Right cardiac atrium (tissue), 5 donors: ENCODE measurements at regions of chr4 and their contacts with region 1.

Region 1: GRCh38 chr4:42282081-42282901 is 115.0 kb upstream of the SHISA3 start:
- DNase-seq: peak in 2 of 3 donors; percentile 31 to 71
- ATAC-seq: peak; percentile 93 to 94
- H3K4me3 ChIP-seq: no peak overlapping the region
- H3K27ac ChIP-seq: no peak overlapping the region
- H3K4me1 ChIP-seq: no peaks in the 10 kb centered on the region
- H3K27me3 ChIP-seq: no peaks in the 10 kb centered on the region

Region 2: DNA sequence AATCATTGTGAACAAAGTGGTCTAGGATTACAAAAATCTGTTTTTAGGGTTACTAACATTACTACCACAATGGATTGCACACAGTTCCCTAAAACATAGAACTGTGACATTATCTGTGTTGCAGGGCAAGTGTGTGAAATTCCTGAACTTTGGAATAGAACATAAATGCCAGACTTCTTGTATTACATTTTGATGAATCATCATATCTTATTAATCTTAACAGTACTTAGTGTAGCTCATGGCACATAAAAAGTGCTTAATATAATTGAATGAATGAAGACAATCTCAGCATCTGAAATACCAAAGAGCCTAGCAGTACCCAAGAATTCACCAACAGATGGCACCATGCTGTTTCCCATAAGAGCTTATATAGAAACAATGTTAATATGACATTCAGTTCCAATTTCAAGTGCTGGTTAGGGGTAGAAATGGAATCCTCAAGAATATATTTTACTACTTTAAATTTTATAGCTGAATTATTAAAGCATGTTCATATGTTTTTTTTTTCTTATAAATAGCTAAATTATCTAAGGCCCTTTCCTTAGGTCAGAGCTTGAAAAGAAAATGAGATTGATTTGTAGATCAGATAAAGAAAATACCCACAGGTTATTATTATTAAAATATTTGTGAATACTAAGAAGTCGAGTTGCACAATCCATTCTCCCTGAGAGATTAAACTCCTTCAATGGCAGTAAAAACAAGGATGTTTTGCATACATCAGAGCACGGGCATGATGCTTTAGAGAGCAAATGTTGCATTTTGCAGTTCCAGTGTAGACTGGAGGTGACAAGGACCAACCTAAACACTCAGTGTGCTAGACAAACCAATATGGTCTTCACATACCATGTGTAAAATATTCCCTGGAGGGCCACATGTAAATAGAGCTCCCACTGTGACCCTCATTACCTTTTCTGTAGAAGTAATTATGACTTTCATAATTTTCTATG is 89.3 kb after region 1 on chr4:
- intact Hi-C with region 1: loop called in 2 of 4 experiments (anchors 5 to 10 kb)
- DNase-seq: no peak
- ATAC-seq: peak in 1 of 2 donors; percentile 45
- H3K4me3 ChIP-seq: no peak overlapping the region
- H3K27ac ChIP-seq: no peak overlapping the region
- H3K4me1 ChIP-seq: no peaks in the 10 kb centered on the region
- H3K27me3 ChIP-seq: no peaks in the 10 kb centered on the region

Region 3: GRCh38 chr4:42513748-42514492 is 231.6 kb after region 1 on chr4:
- intact Hi-C with region 1: loop called in 2 of 4 experiments (anchors 2 to 5 kb)
- DNase-seq: no peak
- ATAC-seq: peak in 1 of 2 donors; percentile 89
- H3K4me3 ChIP-seq: no peak overlapping the region
- H3K27ac ChIP-seq: no peak overlapping the region
- H3K4me1 ChIP-seq: no peaks in the 10 kb centered on the region
- H3K27me3 ChIP-seq: no peaks in the 10 kb centered on the region

Region 4: GRCh38 chr4:42519803-42520417 is 237.6 kb after region 1 on chr4:
- intact Hi-C with region 1: loop called in 3 of 4 experiments (anchors 2 to 5 kb)
- DNase-seq: no peak
- ATAC-seq: peak in 1 of 2 donors; percentile 47
- H3K4me3 ChIP-seq: no peak overlapping the region
- H3K27ac ChIP-seq: no peak overlapping the region
- H3K4me1 ChIP-seq: no peaks in the 10 kb centered on the region
- H3K27me3 ChIP-seq: no peaks in the 10 kb centered on the region